G401 (cell line): ENCODE measurements at regions of chr1 and their contacts with region 1.

Region 1: GRCh38 chr1:24987875-24988557 is 57.9 kb upstream of the RUNX3 start:
- DNase-seq: no peak

Region 2: DNA sequence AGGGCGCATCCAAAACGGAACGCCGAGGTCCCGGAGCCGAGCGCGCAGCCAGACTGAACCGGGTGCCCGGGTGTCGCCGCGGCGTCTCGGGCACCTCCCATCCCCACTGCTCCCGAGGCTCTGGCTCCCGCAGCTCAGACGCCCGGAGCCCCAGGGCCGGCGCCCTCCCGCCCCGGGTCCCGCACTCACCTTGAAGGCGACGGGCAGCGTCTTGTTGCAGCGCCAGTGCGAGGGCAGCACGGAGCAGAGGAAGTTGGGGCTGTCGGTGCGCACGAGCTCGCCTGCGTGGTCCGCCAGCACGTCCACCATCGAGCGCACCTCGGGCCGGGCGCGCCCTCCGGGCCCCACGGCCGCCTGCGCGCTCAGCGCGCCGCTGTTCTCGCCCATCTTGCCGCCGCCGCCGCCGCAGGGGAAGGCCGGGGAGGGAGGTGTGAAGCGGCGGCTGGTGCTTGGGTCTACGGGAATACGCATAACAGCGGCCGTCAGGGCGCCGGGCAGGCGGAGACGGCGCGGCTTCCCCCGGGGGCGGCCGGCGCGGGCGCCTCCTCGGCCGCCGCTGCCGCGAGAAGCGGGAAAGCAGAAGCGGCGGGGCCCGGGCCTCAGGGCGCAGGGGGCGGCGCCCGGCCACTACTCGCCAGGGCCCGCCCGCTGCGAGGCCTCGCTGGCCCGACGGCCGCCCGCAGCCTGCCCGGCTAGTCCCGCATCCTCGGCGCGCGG is 58.5 kb before region 1 on chr1:
- in situ Hi-C with region 1: loop called (anchors 5 kb)
- DNase-seq: no peak

Region 3: GRCh38 chr1:24941564-24941963 is 46.5 kb before region 1 on chr1:
- in situ Hi-C with region 1: no loop called
- DNase-seq: no peak

Region 4: GRCh38 chr1:25042331-25043227 is 54.6 kb after region 1 on chr1:
- in situ Hi-C with region 1: loop called (anchors 5 kb)
- DNase-seq: no peak

Region 5: DNA sequence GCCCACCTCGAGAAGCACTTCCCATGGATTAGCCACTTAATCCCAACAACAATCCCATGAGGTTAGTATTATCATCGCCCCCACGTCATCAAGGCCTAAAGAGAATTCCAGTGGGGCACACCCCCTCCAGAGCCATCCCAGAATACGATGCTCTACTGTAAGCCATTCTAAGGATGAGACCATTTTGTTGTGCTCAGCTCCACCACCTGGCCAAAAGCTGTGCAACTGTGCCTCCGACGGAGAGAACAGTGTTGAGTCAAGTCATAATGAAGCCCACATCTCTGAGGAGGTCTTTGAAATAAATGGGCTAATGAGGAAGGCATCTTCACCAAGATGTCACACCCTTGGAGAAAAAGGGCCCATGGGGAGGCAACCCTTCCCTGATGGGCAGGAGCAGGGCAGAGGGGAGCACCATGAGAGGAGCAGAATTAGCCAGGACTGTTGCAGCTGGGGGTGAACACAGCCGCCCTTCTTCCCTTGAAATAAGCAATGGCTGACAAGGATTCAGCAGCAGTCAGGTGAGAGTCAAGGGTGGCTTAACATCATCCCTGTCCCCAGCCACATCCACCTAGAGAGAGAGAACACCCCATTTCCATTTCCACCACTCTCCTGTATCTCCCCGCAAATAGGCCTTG is 229.7 kb after region 1 on chr1:
- in situ Hi-C with region 1: loop called (anchors 10 kb)
- DNase-seq: no peak